AG04449 (cell line): ENCODE measurements at regions of chr4 and their contacts with region 1.

Region 1: GRCh38 chr4:89024051-89024675 is 32.8 kb downstream of the FAM13A start:
- DNase-seq: peak; percentile 29
- H3K4me3 ChIP-seq: no peak overlapping the region
- CTCF ChIP-seq: peak; percentile 59

Region 2: GRCh38 chr4:88523325-88524129 is 500.6 kb before region 1 on chr4 and contains the start of gene PYURF:
- CTCF ChIA-PET with region 1: interaction called, 42 read pairs
- POLR2A ChIA-PET with region 1: no interaction called
- DNase-seq: peak; percentile 57
- H3K4me3 ChIP-seq: peak within 1 kb of the TSS; percentile 91
- CTCF ChIP-seq: no peak

Region 3: DNA sequence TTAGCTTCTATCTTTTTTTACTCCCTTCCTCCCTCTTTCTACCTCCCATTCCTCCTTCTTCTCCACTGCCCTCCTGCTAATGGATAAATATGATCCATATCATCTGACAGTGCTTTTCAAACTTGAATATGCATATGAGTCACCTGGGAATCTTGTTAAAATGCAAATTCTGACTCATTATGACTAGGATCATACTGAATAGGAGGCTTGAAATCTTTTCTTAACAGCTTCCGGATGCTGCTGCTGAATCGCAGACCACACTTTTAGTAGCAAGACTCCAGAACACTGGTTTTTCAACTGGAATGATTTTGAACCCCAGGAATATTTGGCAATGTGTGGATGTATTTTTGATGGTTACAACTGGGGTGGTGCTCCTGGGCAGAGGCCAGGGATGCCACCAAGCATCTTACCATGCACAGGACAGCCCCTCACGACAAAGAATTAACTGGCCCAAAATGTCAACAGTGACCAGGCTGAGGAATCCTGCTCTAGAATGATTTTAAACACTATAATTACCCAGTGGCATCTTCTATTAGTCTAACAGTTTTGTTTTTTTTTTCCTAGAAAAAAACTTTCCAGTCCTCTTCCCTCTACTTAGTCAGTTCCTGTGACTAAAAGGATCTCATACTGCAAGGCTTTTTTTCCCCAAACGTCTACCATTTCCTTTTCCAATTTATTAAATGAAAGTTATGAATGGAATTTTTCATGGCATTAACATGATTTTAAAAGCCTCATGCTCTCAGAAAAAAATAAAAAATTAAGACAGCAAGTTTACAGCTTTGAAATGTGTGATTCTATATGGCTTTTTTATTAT is 490.0 kb before region 1 on chr4:
- CTCF ChIA-PET with region 1: interaction called, 42 read pairs
- POLR2A ChIA-PET with region 1: no interaction called
- DNase-seq: peak; percentile 77
- H3K4me3 ChIP-seq: no peak overlapping the region
- CTCF ChIP-seq: no peak

Region 4: GRCh38 chr4:88792268-88792781 is 231.8 kb before region 1 on chr4:
- CTCF ChIA-PET with region 1: interaction called, 17 read pairs
- POLR2A ChIA-PET with region 1: no interaction called
- DNase-seq: peak; percentile 84
- H3K4me3 ChIP-seq: no peak overlapping the region
- CTCF ChIP-seq: no peak

Region 5: DNA sequence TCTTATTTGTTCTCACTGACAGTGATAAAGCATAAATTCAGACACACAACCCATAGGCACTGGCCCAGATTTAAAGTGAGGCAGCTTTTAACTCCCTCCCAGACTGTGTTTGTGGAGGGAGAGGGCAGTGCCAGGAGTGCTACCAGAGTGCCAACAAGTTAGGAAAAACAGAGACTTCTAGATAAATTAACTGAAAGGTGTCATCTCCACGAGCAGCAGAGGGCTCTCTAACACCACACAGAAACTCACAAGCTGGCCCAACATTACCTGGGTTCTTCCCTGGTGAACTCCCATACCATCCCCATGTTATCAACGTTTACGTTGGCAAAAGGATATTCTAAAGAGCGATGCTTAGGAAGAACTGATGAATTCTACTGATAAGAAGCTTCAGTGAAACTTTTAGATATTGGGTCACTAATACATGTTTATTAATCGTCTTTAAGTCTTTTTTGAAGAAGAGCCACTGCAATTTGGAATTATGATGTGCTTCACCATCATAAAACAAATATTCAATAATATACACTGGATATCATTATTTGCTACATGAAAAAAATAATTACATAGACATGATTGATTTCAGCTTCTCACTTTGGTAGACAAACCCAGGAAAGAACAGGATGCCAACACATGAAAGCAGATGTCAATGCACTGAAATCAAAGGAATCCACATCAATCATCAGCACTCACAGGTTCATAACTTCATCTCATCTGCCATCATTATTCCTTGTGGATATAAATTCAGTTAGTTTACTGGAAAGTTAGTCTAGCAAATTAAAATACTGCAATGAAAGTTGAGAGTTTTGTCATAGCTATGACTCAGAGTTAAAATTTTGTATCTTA is 205.3 kb before region 1 on chr4:
- CTCF ChIA-PET with region 1: interaction called, 299 read pairs
- POLR2A ChIA-PET with region 1: no interaction called
- DNase-seq: no peak
- H3K4me3 ChIP-seq: no peak overlapping the region
- CTCF ChIP-seq: peak; percentile 45

Region 6: GRCh38 chr4:89056953-89057398 is 32.8 kb after region 1 on chr4 and contains the start of gene FAM13A:
- CTCF ChIA-PET with region 1: no interaction called
- POLR2A ChIA-PET with region 1: no interaction called
- DNase-seq: peak; percentile 91
- H3K4me3 ChIP-seq: peak within 1 kb of the TSS; percentile 59
- CTCF ChIP-seq: no peak